Activated CD4-positive, alpha-beta memory T cell treated with anti-CD3 and anti-CD28 coated beads for 36 hours (primary cell): ENCODE measurements at regions of chr22 and their contacts with region 1.

Region 1: DNA sequence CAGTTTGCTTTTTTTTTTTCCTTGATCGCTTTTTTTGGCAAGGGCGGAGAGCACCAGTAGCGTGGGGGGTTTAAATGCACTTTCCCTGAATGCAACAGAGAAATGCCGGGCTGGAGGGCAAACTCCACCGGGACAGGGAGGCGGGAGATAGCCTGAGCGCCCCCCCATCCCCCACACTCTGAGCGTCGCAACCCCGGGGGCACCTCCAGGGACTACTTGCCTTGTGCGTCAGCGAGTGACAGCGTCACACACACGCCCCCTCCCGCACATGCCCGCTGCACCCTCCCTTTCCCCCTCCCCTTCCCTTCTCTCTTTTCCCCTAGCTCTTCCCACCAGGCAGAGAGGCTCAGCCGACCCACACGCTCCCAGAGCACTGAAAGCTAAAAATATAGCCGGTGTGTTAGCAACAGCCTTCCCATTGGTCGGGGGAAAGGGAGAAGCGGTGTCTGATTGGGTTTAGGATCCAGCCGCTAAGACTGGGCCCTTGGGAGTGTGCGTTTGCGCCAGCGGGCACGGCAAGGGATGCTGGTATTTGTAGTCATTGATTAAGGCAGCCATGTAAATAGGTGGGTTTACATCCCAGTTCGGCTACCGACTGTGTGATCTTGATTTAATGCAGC is 1.7 kb upstream of the TOB2 start:
- DNase-seq: peak; percentile 95
- H3K4me3 Mint-ChIP-seq: peak overlapping the region; percentile 94
- H3K27ac Mint-ChIP-seq: peak overlapping the region; percentile 98
- H3K4me1 Mint-ChIP-seq: peaks cover 17% of the 10 kb centered on the region
- H3K27me3 Mint-ChIP-seq: no peaks in the 10 kb centered on the region

Region 2: DNA sequence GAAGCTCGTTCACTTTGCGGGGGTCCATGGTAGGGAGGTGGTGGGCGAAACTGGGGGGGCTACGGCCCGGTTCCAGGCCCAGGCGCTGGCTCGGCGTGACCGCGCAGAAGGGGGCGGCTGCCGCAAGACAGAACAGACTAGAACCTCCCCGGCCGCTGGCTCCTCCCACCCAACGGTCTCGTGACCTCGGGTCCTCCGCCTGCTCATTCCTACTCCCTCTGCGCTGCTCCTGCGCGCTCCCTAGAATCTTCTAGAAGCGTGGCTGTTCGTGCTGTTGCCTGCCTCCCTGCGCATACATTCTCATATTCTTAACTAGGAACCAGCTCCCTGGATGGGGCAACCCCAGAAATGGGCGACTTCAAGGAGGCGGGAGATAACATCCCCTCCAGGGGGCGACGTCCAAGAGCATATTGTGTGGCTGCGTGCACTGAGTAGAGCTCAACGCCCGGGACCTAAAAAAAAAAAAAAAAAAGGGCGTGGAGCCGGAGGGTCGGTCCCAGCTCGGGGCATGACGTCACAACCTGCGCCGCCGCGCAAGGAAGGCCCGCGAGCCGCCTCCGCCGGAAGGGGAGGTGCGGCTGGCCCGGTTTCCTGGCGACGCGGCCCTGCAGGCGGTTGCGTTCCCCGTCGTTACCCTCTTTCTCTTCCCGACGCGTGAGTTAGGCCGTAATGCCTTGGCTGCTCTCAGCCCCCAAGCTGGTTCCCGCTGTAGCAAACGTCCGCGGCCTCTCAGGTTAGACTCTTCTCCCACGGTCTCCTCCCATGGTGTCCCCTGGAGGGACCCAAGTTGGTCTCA is 591.6 kb before region 1 on chr22 and contains the starts of genes ST13 and XPNPEP3:
- CTCF ChIA-PET with region 1: no interaction called
- POLR2A ChIA-PET with region 1: no interaction called
- intact Hi-C with region 1: loop called (anchors 5 kb)
- DNase-seq: peak; percentile 98
- H3K4me3 Mint-ChIP-seq: peak within 1 kb of the TSS; percentile 98
- H3K27ac Mint-ChIP-seq: peak within 1 kb of the TSS; percentile 99
- H3K4me1 Mint-ChIP-seq: peaks cover 48% of the 10 kb centered on the region
- H3K27me3 Mint-ChIP-seq: no peaks in the 10 kb centered on the region
- total RNA-seq, gene ST13: 240 to 263 TPM
- total RNA-seq, gene XPNPEP3: 19.4 to 20.1 TPM

Region 3: DNA sequence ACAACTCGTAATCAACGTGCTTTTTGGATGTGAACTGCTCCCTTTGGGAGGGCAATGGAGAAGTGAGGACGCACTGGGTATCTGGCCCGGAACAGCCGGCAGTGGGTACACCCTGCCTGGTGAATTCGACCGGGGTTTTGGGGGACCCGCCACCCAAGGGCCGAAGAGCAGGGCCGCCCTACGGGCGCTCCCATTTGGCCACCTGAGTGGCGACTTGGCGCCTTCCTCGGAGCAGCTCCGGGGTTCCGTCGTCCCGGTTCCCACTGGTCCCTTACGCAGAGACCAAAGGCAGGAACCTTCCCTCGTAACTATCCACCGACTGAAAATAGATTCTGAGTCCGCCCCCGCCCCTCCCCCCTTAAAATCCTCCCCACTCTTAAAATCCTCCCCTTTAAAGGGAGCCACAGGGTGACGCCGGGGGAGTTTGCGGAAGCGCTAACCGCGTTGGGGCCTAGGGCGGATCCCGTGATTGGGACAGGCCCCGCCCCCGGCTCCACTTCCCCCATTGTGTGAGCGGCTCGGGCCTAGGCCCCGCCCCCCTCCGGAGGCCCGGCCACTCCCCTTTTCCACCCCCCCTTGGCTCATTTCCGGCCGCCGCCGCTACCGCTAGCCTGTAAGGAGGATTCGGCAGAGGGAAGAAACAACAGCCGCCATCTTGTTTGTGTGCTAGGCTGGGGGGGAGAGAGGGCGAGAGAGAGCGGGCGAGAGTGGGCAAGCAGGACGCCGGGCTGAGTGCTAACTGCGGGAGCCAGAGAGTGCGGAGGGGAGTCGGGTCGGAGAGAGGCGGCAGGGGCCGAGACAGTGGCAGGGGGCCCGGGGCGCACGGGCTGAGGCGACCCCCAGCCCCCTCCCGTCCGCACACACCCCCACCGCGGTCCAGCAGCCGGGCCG is 356.9 kb before region 1 on chr22:
- CTCF ChIA-PET with region 1: no interaction called
- POLR2A ChIA-PET with region 1: no interaction called
- intact Hi-C with region 1: loop called (anchors 10 kb)
- DNase-seq: peak; percentile 100
- H3K4me3 Mint-ChIP-seq: peak overlapping the region; percentile 93
- H3K27ac Mint-ChIP-seq: peak overlapping the region; percentile 98
- H3K4me1 Mint-ChIP-seq: peaks cover 25% of the 10 kb centered on the region
- H3K27me3 Mint-ChIP-seq: no peaks in the 10 kb centered on the region

Region 4: DNA sequence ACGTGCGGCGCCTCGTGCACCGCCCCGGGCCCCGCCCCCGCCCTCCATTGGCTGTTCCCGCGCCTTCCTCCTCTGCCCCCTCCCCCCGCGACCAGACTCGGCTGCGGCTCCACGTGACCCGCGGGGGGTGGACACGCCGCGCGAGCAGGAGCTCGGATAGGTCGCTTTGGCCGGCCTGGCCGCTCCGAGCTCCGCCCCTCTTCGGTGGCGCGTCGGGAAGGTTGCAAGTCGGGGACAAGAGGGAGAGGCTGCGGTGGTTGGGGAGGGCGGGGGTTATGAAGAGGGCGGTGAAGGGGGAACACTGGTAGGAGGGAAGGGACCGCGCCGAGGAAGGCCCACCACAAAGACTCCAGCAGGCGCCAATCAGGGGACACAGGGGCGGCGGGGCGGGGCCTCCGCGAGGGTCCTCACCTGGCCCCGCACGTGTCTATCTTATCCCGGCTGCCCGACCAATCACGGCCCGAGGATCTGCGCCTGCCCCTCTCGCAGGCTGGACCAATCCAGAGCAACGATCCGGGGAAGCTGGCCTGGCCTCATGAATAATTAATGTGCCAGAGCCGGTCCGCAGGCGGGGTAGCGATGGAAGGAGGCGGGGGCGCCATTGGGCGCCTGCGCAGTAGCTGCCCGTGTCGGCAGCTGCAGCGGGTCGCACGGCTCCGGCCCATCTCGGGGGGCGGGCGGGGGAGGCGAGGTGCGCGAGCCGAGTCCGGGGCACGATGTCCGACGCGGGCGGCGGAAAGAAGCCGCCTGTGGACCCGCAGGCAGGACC is 66.8 kb before region 1 on chr22 and contains the start of gene TEF:
- CTCF ChIA-PET with region 1: no interaction called
- POLR2A ChIA-PET with region 1: interaction called, 11 read pairs
- intact Hi-C with region 1: loop called (anchors 1 kb)
- DNase-seq: peak; percentile 98
- H3K4me3 Mint-ChIP-seq: peak within 1 kb of the TSS; percentile 81
- H3K27ac Mint-ChIP-seq: peak within 1 kb of the TSS; percentile 86
- H3K4me1 Mint-ChIP-seq: peaks cover 15% of the 10 kb centered on the region
- H3K27me3 Mint-ChIP-seq: no peaks in the 10 kb centered on the region
- total RNA-seq, gene TEF: 1.4 to 1.6 TPM

Region 5: DNA sequence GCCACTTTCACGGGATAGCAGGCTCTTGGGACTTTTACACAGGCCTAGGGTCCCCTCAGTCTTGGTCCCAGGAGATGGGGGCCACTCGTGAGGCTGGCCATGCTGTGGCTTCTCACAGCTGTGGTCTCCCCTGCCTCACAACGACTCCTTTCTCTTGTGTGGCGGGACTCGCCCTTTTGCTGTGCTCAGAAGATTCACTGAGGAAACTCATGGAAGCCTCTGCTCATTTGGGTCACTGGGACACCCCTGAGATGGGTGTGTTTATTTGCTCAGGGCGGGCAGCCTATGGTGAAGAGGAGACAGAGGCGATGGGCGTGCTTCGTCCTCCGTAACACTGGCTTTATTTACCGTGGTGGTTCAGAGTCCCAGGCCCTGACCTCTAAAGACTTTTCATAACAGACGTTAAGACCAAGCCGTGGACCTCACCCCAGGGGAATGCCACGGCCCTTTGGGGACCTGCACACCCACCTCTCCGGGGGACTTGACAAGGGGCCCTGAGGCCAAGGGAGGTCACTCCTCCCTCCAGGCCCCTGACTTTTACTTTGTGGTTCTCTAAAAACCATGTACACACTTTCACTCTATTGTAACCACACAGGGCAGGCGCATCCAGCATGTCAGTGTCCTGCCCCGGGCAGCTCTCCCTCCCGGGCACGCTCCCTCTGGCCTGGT is 51.0 kb before region 1 on chr22:
- CTCF ChIA-PET with region 1: no interaction called
- POLR2A ChIA-PET with region 1: no interaction called
- intact Hi-C with region 1: no loop called
- DNase-seq: no peak
- H3K4me3 Mint-ChIP-seq: no peak overlapping the region
- H3K27ac Mint-ChIP-seq: no peak overlapping the region
- H3K4me1 Mint-ChIP-seq: no peaks in the 10 kb centered on the region
- H3K27me3 Mint-ChIP-seq: no peaks in the 10 kb centered on the region

Region 6: DNA sequence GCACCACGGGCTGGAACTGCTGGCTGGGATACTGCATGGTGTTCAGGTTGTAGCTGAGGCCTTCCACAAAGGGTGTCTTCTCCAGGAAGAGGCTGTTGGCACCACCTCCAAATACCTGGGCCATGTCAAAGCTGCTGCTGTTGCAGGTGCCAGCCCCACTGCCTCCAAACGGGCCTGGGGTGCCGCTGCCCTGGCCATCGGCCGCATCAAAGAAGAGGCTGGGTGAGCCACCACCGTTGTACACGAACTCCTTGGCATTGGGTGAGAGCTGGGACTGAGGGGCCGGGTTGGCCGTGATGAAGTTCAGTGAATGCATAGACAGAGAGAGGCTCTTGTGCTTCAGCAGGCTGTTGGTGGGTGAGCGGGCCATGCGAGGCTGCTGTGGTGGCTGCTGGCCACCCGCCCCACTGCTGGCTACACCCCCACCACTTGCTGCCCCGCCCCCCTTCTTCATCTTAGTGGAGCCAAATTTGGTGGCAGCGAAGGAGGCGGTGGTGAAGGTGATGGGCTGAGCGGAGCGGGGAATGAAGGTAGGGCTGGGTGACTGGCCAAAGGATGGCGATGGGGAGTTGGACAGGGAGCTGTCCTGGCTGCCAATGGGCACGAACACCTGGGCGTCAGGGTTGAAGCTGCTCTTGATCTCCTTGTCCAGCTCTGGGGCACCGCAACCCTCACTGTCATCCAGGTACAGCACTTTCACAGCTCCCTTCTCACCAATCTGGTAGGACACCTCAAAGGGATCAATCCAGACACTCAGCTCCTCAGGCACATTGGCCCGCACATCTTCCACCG is 11.8 kb before region 1 on chr22:
- CTCF ChIA-PET with region 1: interaction called, 4 read pairs
- POLR2A ChIA-PET with region 1: interaction called, 12 read pairs
- intact Hi-C with region 1: no loop called
- DNase-seq: no peak
- H3K4me3 Mint-ChIP-seq: no peak overlapping the region
- H3K27ac Mint-ChIP-seq: no peak overlapping the region
- H3K4me1 Mint-ChIP-seq: peaks cover 16% of the 10 kb centered on the region
- H3K27me3 Mint-ChIP-seq: no peaks in the 10 kb centered on the region

Region 7: DNA sequence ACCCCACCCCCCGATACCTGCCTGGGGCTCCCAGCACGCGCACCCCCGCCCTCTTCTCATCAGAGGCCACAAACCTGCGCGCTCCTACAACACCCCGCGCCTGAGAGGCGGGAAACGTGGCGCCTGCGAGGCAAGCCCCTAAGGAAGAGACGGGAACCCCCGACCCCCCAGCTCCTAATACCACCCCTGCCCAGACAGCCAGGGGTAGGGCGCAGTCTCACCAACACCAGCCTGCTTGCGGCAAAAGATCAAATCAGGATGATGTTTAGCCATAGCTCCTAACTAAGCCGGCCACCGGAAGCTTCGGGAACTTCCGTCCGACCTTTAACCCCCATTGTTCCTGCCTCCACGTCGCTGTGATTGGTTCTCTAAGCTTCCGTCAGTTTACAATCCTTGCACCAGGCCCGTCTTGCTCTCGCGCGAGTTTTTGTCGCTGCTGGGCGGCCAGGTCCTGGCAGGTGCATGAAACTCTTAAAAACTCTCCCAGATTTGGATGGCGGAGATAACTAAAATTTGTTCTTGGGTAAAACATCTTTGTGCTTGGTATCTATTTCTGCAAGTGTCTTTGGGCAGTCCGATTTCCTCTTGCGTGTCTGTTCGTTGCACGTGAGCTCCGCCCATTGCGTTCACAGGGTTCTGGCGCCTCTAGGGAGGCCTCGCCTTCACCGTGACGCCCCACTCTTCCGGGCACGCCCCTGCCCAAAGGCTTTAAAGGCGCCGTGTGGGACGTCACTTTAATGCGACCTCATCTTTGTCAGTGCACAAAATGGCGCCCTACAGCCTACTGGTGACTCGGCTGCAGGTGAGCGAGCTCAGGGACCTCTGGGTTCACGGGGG is 20.3 kb after region 1 on chr22 and contains the starts of genes ACO2 and PHF5A:
- CTCF ChIA-PET with region 1: interaction called, 14 read pairs
- POLR2A ChIA-PET with region 1: interaction called, 57 read pairs
- intact Hi-C with region 1: loop called (anchors 1 kb)
- DNase-seq: peak; percentile 99
- H3K4me3 Mint-ChIP-seq: peak within 1 kb of the TSS; percentile 93
- H3K27ac Mint-ChIP-seq: peak within 1 kb of the TSS; percentile 99
- H3K4me1 Mint-ChIP-seq: peaks cover 51% of the 10 kb centered on the region
- H3K27me3 Mint-ChIP-seq: no peaks in the 10 kb centered on the region
- total RNA-seq, gene ACO2: 103 to 105 TPM
- total RNA-seq, gene PHF5A: 55.4 to 60.0 TPM

Region 8: GRCh38 chr22:41621099-41621910 is 173.0 kb after region 1 on chr22 and contains the start of gene XRCC6:
- CTCF ChIA-PET with region 1: interaction called, 3 read pairs
- POLR2A ChIA-PET with region 1: interaction called, 6 read pairs
- intact Hi-C with region 1: loop called (anchors 1 kb)
- DNase-seq: peak; percentile 100
- H3K4me3 Mint-ChIP-seq: peak within 1 kb of the TSS; percentile 97
- H3K27ac Mint-ChIP-seq: peak within 1 kb of the TSS; percentile 98
- H3K4me1 Mint-ChIP-seq: peaks cover 40% of the 10 kb centered on the region
- H3K27me3 Mint-ChIP-seq: no peaks in the 10 kb centered on the region
- total RNA-seq, gene XRCC6: 403 to 409 TPM